HCT116 (cell line): ENCODE measurements at regions of chr12 and their contacts with region 1.

Region 1: GRCh38 chr12:70895956-70896355 is 24.6 kb downstream of the PTPRR start:
- DNase-seq: no peak
- ATAC-seq: no peak
- H3K4me3 ChIP-seq: no peak overlapping the region
- H3K27ac ChIP-seq: no peak overlapping the region
- H3K4me1 ChIP-seq: no peaks in the 10 kb centered on the region
- H3K27me3 ChIP-seq: no peaks in the 10 kb centered on the region
- CTCF ChIP-seq: no peak
- POLR2A ChIP-seq: no peak
- RAD21 ChIP-seq: no peak

Region 2: DNA sequence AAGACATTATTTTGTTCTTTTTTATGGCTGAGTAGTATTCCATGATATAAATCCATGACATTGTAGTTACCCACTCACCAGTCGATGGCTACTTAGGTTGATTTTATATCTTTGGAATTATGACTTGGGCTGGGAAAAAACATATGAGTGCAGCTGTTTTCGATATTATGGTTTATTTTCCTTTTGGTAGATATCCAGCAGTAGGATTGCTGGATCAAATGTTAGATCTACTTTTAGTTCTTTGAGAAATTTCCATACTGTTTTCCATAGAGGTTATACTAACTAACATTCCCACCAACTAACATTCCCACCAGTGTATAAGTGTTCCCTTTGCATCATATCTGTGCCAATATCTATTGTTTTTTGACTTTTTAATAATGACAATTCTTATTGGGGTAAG is 54.5 kb after region 1 on chr12:
- CTCF ChIA-PET with region 1: no interaction called
- POLR2A ChIA-PET with region 1: no interaction called
- RAD21 ChIA-PET with region 1: no interaction called
- intact Hi-C with region 1: loop called (anchors 5 kb)
- DNase-seq: no peak
- ATAC-seq: no peak
- H3K4me3 ChIP-seq: no peak overlapping the region
- H3K27ac ChIP-seq: no peak overlapping the region
- H3K4me1 ChIP-seq: no peaks in the 10 kb centered on the region
- H3K27me3 ChIP-seq: no peaks in the 10 kb centered on the region
- CTCF ChIP-seq: no peak
- POLR2A ChIP-seq: no peak
- RAD21 ChIP-seq: no peak

Region 3: GRCh38 chr12:71019282-71019831 is 123.4 kb after region 1 on chr12:
- CTCF ChIA-PET with region 1: no interaction called
- POLR2A ChIA-PET with region 1: no interaction called
- RAD21 ChIA-PET with region 1: no interaction called
- intact Hi-C with region 1: no loop called
- DNase-seq: no peak
- ATAC-seq: no peak
- H3K4me3 ChIP-seq: no peak overlapping the region
- H3K27ac ChIP-seq: no peak overlapping the region
- H3K4me1 ChIP-seq: no peaks in the 10 kb centered on the region
- H3K27me3 ChIP-seq: no peaks in the 10 kb centered on the region
- CTCF ChIP-seq: no peak
- POLR2A ChIP-seq: no peak
- RAD21 ChIP-seq: no peak